ENCODE measurements at regions of chr1 and their contacts with region 1.

Region 1: GRCh38 chr1:15684468-15685291 is 560 bp downstream of the PLEKHM2 start:
- DNase-seq: no peak
- H3K4me3 Mint-ChIP-seq: peak overlapping the region; percentile 79
- H3K27ac Mint-ChIP-seq: peak overlapping the region; percentile 99
- H3K4me1 Mint-ChIP-seq: peaks cover 39% of the 10 kb centered on the region
- H3K27me3 Mint-ChIP-seq: no peaks in the 10 kb centered on the region
- CTCF ChIP-seq: no peak

Region 2: DNA sequence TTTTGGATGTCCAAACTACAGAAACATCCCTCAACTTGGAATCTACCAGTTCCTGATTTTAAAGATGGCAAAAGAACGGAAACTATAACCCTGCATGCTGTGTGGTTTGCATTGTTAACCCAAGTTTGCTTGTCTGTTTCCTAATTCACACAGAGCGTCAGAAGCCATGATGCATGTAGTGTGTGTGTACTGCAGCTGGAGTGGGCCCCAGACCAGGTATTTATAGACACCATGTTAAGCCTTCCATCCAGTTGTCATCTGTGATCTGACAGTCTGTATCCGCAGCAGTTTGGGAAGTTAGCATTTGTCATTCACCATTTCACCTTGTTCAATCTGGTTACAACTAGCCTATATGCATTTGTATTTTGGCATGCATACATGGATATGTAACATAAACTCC is 28.2 kb before region 1 on chr1:
- CTCF ChIA-PET with region 1: interaction called, 3 read pairs
- POLR2A ChIA-PET with region 1: interaction called, 29 read pairs
- intact Hi-C with region 1: loop called (anchors 1 kb)
- DNase-seq: no peak
- H3K4me3 Mint-ChIP-seq: no peak overlapping the region
- H3K27ac Mint-ChIP-seq: no peak overlapping the region
- H3K4me1 Mint-ChIP-seq: no peaks in the 10 kb centered on the region
- H3K27me3 Mint-ChIP-seq: no peaks in the 10 kb centered on the region
- CTCF ChIP-seq: no peak

Region 3: DNA sequence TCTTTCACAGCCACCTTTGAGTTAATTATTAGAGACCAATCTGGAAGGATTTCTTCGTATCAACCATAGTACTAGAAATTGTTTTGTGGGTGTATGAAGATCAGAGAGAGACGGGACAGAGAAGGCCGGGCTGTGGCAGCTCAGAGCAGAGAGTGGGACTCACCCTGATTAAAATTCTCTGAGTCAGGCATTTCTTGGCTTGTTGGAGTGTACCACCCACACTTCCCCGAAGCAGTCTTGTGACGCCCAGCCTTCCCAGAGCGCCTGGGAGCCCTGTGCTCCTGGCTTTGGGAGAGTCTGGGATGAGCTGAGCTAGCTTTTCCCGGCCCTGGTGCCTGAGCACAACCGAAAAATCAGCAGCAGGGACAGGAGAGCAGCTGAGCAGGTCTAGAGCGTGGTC is 18.9 kb after region 1 on chr1:
- CTCF ChIA-PET with region 1: interaction called, 7 read pairs
- POLR2A ChIA-PET with region 1: interaction called, 24 read pairs
- intact Hi-C with region 1: no loop called
- DNase-seq: peak; percentile 86
- H3K4me3 Mint-ChIP-seq: peak overlapping the region; percentile 29
- H3K27ac Mint-ChIP-seq: peak overlapping the region; percentile 96
- H3K4me1 Mint-ChIP-seq: peaks cover 20% of the 10 kb centered on the region
- H3K27me3 Mint-ChIP-seq: no peaks in the 10 kb centered on the region
- CTCF ChIP-seq: no peak